Activated CD4-positive, alpha-beta T cell treated with anti-CD3 and anti-CD28 coated beads, Interleukin-2, amount 10 ng/mL, durations not matched to agents 7 days and 5 days (primary cell): ENCODE measurements at regions of chr13 and their contacts with region 1.

Region 1: DNA sequence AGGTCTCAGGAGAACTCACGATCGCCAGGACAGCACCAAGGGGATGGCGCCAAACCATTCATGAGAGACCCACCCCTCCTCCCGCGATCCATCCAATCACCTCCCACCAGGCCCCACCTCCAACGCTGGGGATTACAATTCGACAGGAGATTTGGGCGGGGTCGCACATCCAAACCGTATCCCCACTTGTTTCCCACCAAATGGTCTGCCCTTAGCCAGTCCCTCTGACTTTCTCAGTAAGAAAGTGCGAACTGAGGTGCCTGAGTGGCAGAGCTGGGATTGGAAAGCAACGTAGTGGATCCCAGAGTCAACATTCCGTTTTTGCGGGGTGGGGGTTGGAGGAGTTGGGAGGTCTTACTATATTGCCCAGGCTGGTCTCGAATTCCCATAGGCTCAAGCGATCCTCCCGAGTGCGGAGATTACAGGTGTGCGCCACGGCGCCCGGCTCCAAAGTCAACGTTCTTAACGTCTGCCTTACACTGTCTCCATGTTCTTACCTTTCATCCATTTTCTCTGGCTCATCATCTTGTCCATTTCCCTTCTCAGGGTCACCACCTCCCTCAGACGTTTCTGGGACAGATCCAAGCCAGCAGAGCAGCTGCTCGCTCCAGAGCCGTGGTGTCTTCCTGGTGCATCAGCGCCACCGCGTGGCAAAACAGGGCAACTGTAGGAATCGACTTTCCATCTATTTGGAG is 102.7 kb upstream of the ABCC4 start:
- DNase-seq: peak; percentile 81
- H3K4me3 Mint-ChIP-seq: peak overlapping the region; percentile 79
- H3K27ac Mint-ChIP-seq: peak overlapping the region; percentile 65
- H3K4me1 Mint-ChIP-seq: peaks cover 13% of the 10 kb centered on the region
- H3K27me3 Mint-ChIP-seq: no peaks in the 10 kb centered on the region

Region 2: GRCh38 chr13:95191821-95192563 is 212.0 kb before region 1 on chr13:
- CTCF ChIA-PET with region 1: interaction called, 24 read pairs
- POLR2A ChIA-PET with region 1: interaction called, 6 read pairs
- DNase-seq: peak; percentile 64
- H3K4me3 Mint-ChIP-seq: no peak overlapping the region
- H3K27ac Mint-ChIP-seq: no peak overlapping the region
- H3K4me1 Mint-ChIP-seq: peaks cover 12% of the 10 kb centered on the region
- H3K27me3 Mint-ChIP-seq: no peaks in the 10 kb centered on the region

Region 3: GRCh38 chr13:95378603-95379002 is 25.4 kb before region 1 on chr13:
- CTCF ChIA-PET with region 1: interaction called, 14 read pairs
- POLR2A ChIA-PET with region 1: no interaction called
- DNase-seq: no peak
- H3K4me3 Mint-ChIP-seq: no peak overlapping the region
- H3K27ac Mint-ChIP-seq: no peak overlapping the region
- H3K4me1 Mint-ChIP-seq: peaks cover 6% of the 10 kb centered on the region
- H3K27me3 Mint-ChIP-seq: peaks cover 3% of the 10 kb centered on the region

Region 4: DNA sequence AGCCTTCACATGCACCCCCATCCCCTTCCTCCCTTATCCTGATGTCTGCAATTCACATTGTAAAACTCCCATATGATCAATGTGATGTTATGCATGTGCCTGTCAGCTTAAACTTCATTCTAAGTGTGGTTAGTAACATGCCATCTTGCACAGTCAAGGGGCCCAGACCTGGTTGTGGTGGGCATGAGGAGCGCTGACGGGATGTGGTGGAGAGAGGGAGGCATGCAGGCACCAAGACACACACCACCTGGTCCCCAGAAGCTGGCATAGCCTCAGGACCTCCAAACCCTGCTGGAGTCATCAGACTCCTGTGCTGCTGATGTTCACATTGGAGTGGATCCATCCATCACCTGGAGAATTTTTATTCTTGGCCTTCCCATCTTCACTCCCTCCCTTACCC is 12.2 kb before region 1 on chr13:
- CTCF ChIA-PET with region 1: interaction called, 11 read pairs
- POLR2A ChIA-PET with region 1: no interaction called
- DNase-seq: no peak
- H3K4me3 Mint-ChIP-seq: no peak overlapping the region
- H3K27ac Mint-ChIP-seq: no peak overlapping the region
- H3K4me1 Mint-ChIP-seq: no peaks in the 10 kb centered on the region
- H3K27me3 Mint-ChIP-seq: peaks cover 13% of the 10 kb centered on the region